CD8-positive, alpha-beta T cell (primary cell): ENCODE measurements at regions of chr1 and their contacts with region 1.

Region 1: GRCh38 chr1:151281969-151282882 is at the start of gene ZNF687:
- DNase-seq: peak; percentile 95 to 100 (median 98)
- ATAC-seq: peak; percentile 84
- H3K4me3 ChIP-seq: peak within 1 kb of the TSS; percentile 72 to 89
- H3K4me3 Mint-ChIP-seq: peak within 1 kb of the TSS; percentile 99
- H3K27ac ChIP-seq: peak within 1 kb of the TSS; percentile 91 to 94
- H3K27ac Mint-ChIP-seq: peak within 1 kb of the TSS; percentile 98
- H3K4me1 ChIP-seq: peaks cover 21% of the 10 kb centered on the region
- H3K4me1 Mint-ChIP-seq: peaks cover 28% of the 10 kb centered on the region
- H3K27me3 ChIP-seq: no peaks in the 10 kb centered on the region
- H3K27me3 Mint-ChIP-seq: no peaks in the 10 kb centered on the region
- CTCF ChIP-seq: no peak
- total RNA-seq, gene ZNF687: 34.0 to 36.3 TPM

Region 2: DNA sequence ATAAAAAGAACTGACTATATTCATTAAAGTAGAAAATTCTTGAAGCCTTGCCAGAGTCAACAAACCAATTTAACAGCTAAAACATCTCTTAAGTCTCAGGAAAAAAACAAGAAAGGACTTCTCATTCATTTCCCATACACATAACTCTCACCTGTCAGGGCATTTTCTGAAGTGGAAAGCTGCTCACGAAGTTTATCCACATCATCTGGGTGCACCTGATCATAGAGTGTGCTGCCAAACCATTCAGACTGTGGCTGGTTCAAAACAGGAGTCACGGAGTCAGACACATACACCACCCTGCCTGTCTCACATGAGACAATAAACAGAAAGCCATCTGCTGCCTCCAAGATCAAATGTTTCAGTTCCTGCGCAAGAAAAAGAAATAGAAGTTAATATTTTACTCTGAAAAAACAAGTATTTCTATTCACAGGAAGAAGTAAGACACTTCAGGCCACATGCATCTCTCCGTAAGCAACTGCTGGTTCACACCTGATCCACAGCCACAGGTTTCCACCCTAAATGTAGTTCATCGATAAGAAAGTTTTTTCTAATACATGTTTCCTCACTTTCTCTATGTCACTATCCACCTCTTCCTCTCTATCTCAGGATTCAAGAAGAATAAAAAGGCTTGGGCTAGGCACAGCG is 446.0 kb before region 1 on chr1:
- CTCF ChIA-PET with region 1: no interaction called
- POLR2A ChIA-PET with region 1: no interaction called
- intact Hi-C with region 1: no loop called
- DNase-seq: no peak
- ATAC-seq: no peak
- H3K4me3 ChIP-seq: no peak overlapping the region
- H3K4me3 Mint-ChIP-seq: no peak overlapping the region
- H3K27ac ChIP-seq: no peak overlapping the region
- H3K27ac Mint-ChIP-seq: no peak overlapping the region
- H3K4me1 ChIP-seq: peaks cover 8% of the 10 kb centered on the region
- H3K4me1 Mint-ChIP-seq: peaks cover 9% of the 10 kb centered on the region
- H3K27me3 ChIP-seq: no peaks in the 10 kb centered on the region
- H3K27me3 Mint-ChIP-seq: no peaks in the 10 kb centered on the region
- CTCF ChIP-seq: no peak

Region 3: GRCh38 chr1:150876119-150876454 is 406.1 kb before region 1 on chr1:
- CTCF ChIA-PET with region 1: no interaction called
- POLR2A ChIA-PET with region 1: no interaction called
- intact Hi-C with region 1: loop called in 1 of 2 experiments (anchors 1 kb)
- DNase-seq: peak in 1 of 9 experiments; percentile 42
- ATAC-seq: peak; percentile 42
- H3K4me3 ChIP-seq: peak overlapping the region; percentile 86 to 97
- H3K4me3 Mint-ChIP-seq: peak overlapping the region; percentile 89
- H3K27ac ChIP-seq: peak overlapping the region; percentile 61 to 76
- H3K27ac Mint-ChIP-seq: peak overlapping the region; percentile 93
- H3K4me1 ChIP-seq: peaks cover 20% of the 10 kb centered on the region
- H3K4me1 Mint-ChIP-seq: peaks cover 29% of the 10 kb centered on the region
- H3K27me3 ChIP-seq: no peaks in the 10 kb centered on the region
- H3K27me3 Mint-ChIP-seq: no peaks in the 10 kb centered on the region
- CTCF ChIP-seq: no peak

Region 4: DNA sequence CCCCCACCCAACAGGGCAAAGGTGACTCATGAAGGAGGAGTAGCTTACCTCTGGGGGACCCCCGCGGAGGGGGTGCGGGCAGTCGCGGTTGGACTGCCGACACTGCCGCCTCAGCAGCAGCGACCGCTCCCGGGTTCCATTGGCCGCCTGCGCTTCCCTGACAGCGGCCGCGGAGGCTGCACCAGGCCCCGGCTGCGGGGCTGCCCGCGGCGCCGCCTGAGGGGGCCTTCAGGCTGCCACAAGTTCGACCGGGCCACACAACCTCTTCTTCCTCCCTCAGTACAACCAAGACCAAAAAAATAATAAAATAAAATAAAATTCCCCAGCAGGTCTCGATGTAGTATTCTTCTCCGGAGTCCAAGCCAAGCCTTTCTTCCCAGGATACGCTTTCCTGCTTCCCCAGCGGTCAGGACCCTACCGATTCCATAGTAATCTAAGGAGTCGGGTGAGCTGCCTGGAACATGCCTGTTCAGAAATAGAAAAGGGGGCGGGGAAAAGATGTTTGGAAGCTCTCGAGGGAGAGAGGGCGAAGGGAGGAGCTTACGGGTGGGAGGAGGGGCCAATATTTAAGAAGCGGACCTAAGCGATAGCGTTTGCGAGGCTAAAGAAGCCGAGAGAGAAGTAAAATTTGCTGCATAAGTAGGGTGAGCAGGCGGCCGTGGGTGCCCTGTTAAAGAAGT is 45.1 kb after region 1 on chr1 and contains the start of gene PI4KB:
- CTCF ChIA-PET with region 1: interaction called, 11 read pairs
- POLR2A ChIA-PET with region 1: interaction called, 7 read pairs
- intact Hi-C with region 1: loop called (anchors 1 kb)
- DNase-seq: peak; percentile 76 to 98 (median 87)
- ATAC-seq: peak; percentile 93
- H3K4me3 ChIP-seq: peak within 1 kb of the TSS; percentile 67 to 86
- H3K4me3 Mint-ChIP-seq: peak within 1 kb of the TSS; percentile 88
- H3K27ac ChIP-seq: peak within 1 kb of the TSS; percentile 75 to 98
- H3K27ac Mint-ChIP-seq: peak within 1 kb of the TSS; percentile 93
- H3K4me1 ChIP-seq: peaks cover 15% of the 10 kb centered on the region
- H3K4me1 Mint-ChIP-seq: peaks cover 47% of the 10 kb centered on the region
- H3K27me3 ChIP-seq: no peaks in the 10 kb centered on the region
- H3K27me3 Mint-ChIP-seq: no peaks in the 10 kb centered on the region
- CTCF ChIP-seq: no peak
- total RNA-seq, gene PI4KB: 63.1 to 63.2 TPM

Region 5: DNA sequence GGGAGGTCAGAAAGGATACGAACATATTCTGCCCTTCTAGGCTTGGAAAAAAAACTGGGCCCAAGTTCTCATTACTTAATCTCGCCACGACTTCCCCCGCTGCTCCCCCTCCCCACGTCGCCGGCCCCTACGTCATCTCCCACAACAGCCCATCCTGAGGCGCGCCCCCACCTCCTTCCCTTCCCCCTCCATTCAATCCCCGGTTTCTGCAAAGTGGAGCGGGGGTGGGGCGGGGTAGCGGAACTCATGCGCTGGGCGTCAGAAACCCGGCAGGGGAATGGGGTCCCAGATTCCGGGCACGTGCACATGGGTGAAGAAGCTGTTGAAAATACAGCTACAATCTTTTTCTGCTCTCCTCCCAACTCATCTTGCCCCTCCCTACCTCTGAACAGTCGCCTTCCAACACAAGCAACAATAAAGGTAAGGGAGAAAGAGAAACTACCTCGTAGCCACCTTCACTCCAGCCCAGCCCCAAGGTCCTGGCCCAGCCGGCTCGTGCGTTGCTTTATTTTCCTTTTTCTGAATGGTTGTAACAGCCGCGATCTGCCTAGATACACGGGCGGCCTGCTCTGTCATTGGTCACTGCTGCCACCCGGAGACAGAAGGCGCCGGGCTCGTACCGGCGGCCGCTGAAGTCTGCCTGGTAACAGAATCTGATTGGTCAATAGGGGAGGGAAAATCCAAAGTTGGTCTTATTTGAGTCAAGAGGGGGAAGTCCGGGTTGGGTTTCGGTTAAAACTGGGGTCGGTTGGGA is 64.7 kb after region 1 on chr1 and contains the start of gene RFX5:
- CTCF ChIA-PET with region 1: interaction called, 11 read pairs
- POLR2A ChIA-PET with region 1: no interaction called
- intact Hi-C with region 1: loop called (anchors 1 kb)
- DNase-seq: peak; percentile 85 to 99 (median 93)
- ATAC-seq: peak; percentile 92
- H3K4me3 ChIP-seq: peak within 1 kb of the TSS; percentile 75 to 83
- H3K4me3 Mint-ChIP-seq: peak within 1 kb of the TSS; percentile 95
- H3K27ac ChIP-seq: peak within 1 kb of the TSS; percentile 89 to 98
- H3K27ac Mint-ChIP-seq: peak within 1 kb of the TSS; percentile 99
- H3K4me1 ChIP-seq: peaks cover 15% of the 10 kb centered on the region
- H3K4me1 Mint-ChIP-seq: peaks cover 38% of the 10 kb centered on the region
- H3K27me3 ChIP-seq: no peaks in the 10 kb centered on the region
- H3K27me3 Mint-ChIP-seq: no peaks in the 10 kb centered on the region
- CTCF ChIP-seq: no peak
- total RNA-seq, gene RFX5: 62.6 to 65.9 TPM

Region 6: GRCh38 chr1:151459331-151460046 is 177.3 kb after region 1 on chr1 and contains the start of gene POGZ:
- CTCF ChIA-PET with region 1: no interaction called
- POLR2A ChIA-PET with region 1: interaction called, 3 read pairs
- intact Hi-C with region 1: loop called in 1 of 2 experiments (anchors 5 kb)
- DNase-seq: peak; percentile 89 to 97 (median 95)
- ATAC-seq: peak; percentile 69
- H3K4me3 ChIP-seq: peak within 1 kb of the TSS; percentile 75 to 79
- H3K4me3 Mint-ChIP-seq: peak within 1 kb of the TSS; percentile 89
- H3K27ac ChIP-seq: peak within 1 kb of the TSS; percentile 73 to 88
- H3K27ac Mint-ChIP-seq: peak within 1 kb of the TSS; percentile 93
- H3K4me1 ChIP-seq: peaks cover 18% of the 10 kb centered on the region
- H3K4me1 Mint-ChIP-seq: peaks cover 29% of the 10 kb centered on the region
- H3K27me3 ChIP-seq: peaks cover 0 to 1% of the 10 kb centered on the region in 2 experiments
- H3K27me3 Mint-ChIP-seq: peaks cover 24% of the 10 kb centered on the region
- CTCF ChIP-seq: no peak
- total RNA-seq, gene POGZ: 85.4 to 88.0 TPM

Region 7: GRCh38 chr1:151494741-151495281 is 212.6 kb after region 1 on chr1:
- CTCF ChIA-PET with region 1: no interaction called
- POLR2A ChIA-PET with region 1: no interaction called
- intact Hi-C with region 1: no loop called
- DNase-seq: no peak
- ATAC-seq: peak; percentile 36
- H3K4me3 ChIP-seq: no peak overlapping the region
- H3K4me3 Mint-ChIP-seq: no peak overlapping the region
- H3K27ac ChIP-seq: no peak overlapping the region
- H3K27ac Mint-ChIP-seq: no peak overlapping the region
- H3K4me1 ChIP-seq: no peaks in the 10 kb centered on the region
- H3K4me1 Mint-ChIP-seq: no peaks in the 10 kb centered on the region
- H3K27me3 ChIP-seq: no peaks in the 10 kb centered on the region
- H3K27me3 Mint-ChIP-seq: no peaks in the 10 kb centered on the region
- CTCF ChIP-seq: no peak

Region 8: GRCh38 chr1:151790071-151790940 is 508.1 kb after region 1 on chr1 and contains the start of gene TDRKH:
- CTCF ChIA-PET with region 1: no interaction called
- POLR2A ChIA-PET with region 1: no interaction called
- intact Hi-C with region 1: loop called (anchors 5 kb)
- DNase-seq: peak; percentile 95 to 99 (median 97)
- ATAC-seq: peak; percentile 94
- H3K4me3 ChIP-seq: peak within 1 kb of the TSS; percentile 68 to 82
- H3K4me3 Mint-ChIP-seq: peak within 1 kb of the TSS; percentile 98
- H3K27ac ChIP-seq: peak within 1 kb of the TSS; percentile 29 to 37
- H3K27ac Mint-ChIP-seq: peak within 1 kb of the TSS; percentile 89
- H3K4me1 ChIP-seq: peaks cover 12% of the 10 kb centered on the region
- H3K4me1 Mint-ChIP-seq: peaks cover 30% of the 10 kb centered on the region
- H3K27me3 ChIP-seq: no peaks in the 10 kb centered on the region
- H3K27me3 Mint-ChIP-seq: no peaks in the 10 kb centered on the region
- CTCF ChIP-seq: no peak
- total RNA-seq, gene TDRKH: 3.6 to 3.9 TPM

Region 9: DNA sequence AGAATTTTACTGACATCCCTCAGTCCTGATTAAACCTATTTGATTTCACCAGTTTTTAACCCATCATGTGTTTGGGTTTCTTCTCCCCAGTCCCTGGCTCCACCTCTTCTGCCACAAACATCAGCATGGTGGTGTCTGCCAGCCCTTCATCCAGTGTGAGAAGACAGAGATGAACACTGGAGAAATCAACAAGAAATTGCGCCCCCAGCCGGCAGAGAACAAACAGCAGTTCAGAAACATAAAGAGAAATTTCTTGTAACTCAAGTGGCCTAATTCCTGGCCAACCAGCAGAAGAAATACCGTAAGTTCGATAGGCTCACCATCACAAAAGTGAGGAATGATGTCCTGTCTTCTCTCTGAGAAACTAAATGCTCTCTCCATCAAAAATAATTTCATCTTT is 736.3 kb after region 1 on chr1:
- CTCF ChIA-PET with region 1: no interaction called
- POLR2A ChIA-PET with region 1: no interaction called
- intact Hi-C with region 1: no loop called
- DNase-seq: peak in 2 of 9 experiments; percentile 9 to 14
- ATAC-seq: no peak
- H3K4me3 ChIP-seq: no peak overlapping the region
- H3K4me3 Mint-ChIP-seq: no peak overlapping the region
- H3K27ac ChIP-seq: no peak overlapping the region
- H3K27ac Mint-ChIP-seq: no peak overlapping the region
- H3K4me1 ChIP-seq: no peaks in the 10 kb centered on the region
- H3K4me1 Mint-ChIP-seq: no peaks in the 10 kb centered on the region
- H3K27me3 ChIP-seq: no peaks in the 10 kb centered on the region
- H3K27me3 Mint-ChIP-seq: peaks cover 4% of the 10 kb centered on the region
- CTCF ChIP-seq: no peak